Activated CD4-positive, alpha-beta memory T cell treated with anti-CD3 and anti-CD28 coated beads, Interleukin-2, amount 10 ng/mL, durations not matched to agents 7 days and 5 days (primary cell): ENCODE measurements at regions of chr10 and their contacts with region 1.

Region 1: GRCh38 chr10:88880282-88881076 is 434 bp downstream of the STAMBPL1 start:
- DNase-seq: peak; percentile 84
- H3K4me3 Mint-ChIP-seq: peak overlapping the region; percentile 97
- H3K27ac Mint-ChIP-seq: peak overlapping the region; percentile 99
- H3K4me1 Mint-ChIP-seq: peaks cover 60% of the 10 kb centered on the region
- H3K27me3 Mint-ChIP-seq: no peaks in the 10 kb centered on the region

Region 2: GRCh38 chr10:88901206-88901983 is 20.9 kb after region 1 on chr10:
- CTCF ChIA-PET with region 1: interaction called, 3 read pairs
- POLR2A ChIA-PET with region 1: interaction called, 27 read pairs
- DNase-seq: no peak
- H3K4me3 Mint-ChIP-seq: no peak overlapping the region
- H3K27ac Mint-ChIP-seq: peak overlapping the region; percentile 36
- H3K4me1 Mint-ChIP-seq: peaks cover 48% of the 10 kb centered on the region
- H3K27me3 Mint-ChIP-seq: no peaks in the 10 kb centered on the region